ENCODE measurements at regions of chr21 and their contacts with region 1.

Region 1: GRCh38 chr21:33324291-33325221 is at the start of gene IFNAR1:
- DNase-seq: peak; percentile 98
- H3K4me3 Mint-ChIP-seq: no peak within 1 kb of the TSS
- H3K27ac Mint-ChIP-seq: no peak within 1 kb of the TSS
- H3K4me1 Mint-ChIP-seq: peaks cover 20% of the 10 kb centered on the region
- H3K27me3 Mint-ChIP-seq: peaks cover 7% of the 10 kb centered on the region
- total RNA-seq, gene IFNAR1: 26.8 and 27.9 TPM in 2 replicates

Region 2: GRCh38 chr21:33238565-33239255 is 85.8 kb before region 1 on chr21:
- intact Hi-C with region 1: loop called (anchors 2 kb)
- DNase-seq: no peak
- H3K4me3 Mint-ChIP-seq: peak overlapping the region; percentile 71
- H3K27ac Mint-ChIP-seq: peak overlapping the region; percentile 92
- H3K4me1 Mint-ChIP-seq: peaks cover 71% of the 10 kb centered on the region
- H3K27me3 Mint-ChIP-seq: no peaks in the 10 kb centered on the region

Region 3: GRCh38 chr21:33266050-33266788 is 58.3 kb before region 1 on chr21 and contains the start of gene IL10RB:
- intact Hi-C with region 1: loop called (anchors 2 kb)
- DNase-seq: peak; percentile 62
- H3K4me3 Mint-ChIP-seq: peak within 1 kb of the TSS; percentile 98
- H3K27ac Mint-ChIP-seq: peak within 1 kb of the TSS; percentile 89
- H3K4me1 Mint-ChIP-seq: peaks cover 32% of the 10 kb centered on the region
- H3K27me3 Mint-ChIP-seq: no peaks in the 10 kb centered on the region
- total RNA-seq, gene IL10RB: 23.4 and 24.7 TPM in 2 replicates

Region 4: GRCh38 chr21:33360881-33361602 is 36.5 kb after region 1 on chr21:
- intact Hi-C with region 1: loop called (anchors 1 kb)
- DNase-seq: peak; percentile 73
- H3K4me3 Mint-ChIP-seq: peak overlapping the region; percentile 67
- H3K27ac Mint-ChIP-seq: peak overlapping the region; percentile 66
- H3K4me1 Mint-ChIP-seq: peaks cover 18% of the 10 kb centered on the region
- H3K27me3 Mint-ChIP-seq: no peaks in the 10 kb centered on the region

Region 5: GRCh38 chr21:33394260-33394659 is 69.7 kb after region 1 on chr21:
- intact Hi-C with region 1: no loop called
- DNase-seq: no peak
- H3K4me3 Mint-ChIP-seq: no peak overlapping the region
- H3K27ac Mint-ChIP-seq: no peak overlapping the region
- H3K4me1 Mint-ChIP-seq: no peaks in the 10 kb centered on the region
- H3K27me3 Mint-ChIP-seq: peaks cover 30% of the 10 kb centered on the region